HepG2 (cell line): ENCODE measurements at regions of chr4 and their contacts with region 1.

Region 1: GRCh38 chr4:138348055-138348454 is 105.9 kb upstream of the SLC7A11 start:
- DNase-seq: peak; percentile 80
- ATAC-seq: peak; percentile 87
- H3K4me3 ChIP-seq: no peak overlapping the region
- H3K27ac ChIP-seq: peak overlapping the region; percentile 38
- H3K4me1 ChIP-seq: peaks cover 41% of the 10 kb centered on the region
- H3K27me3 ChIP-seq: no peaks in the 10 kb centered on the region; a peak in 1 of 5 replicates
- CTCF ChIP-seq: no peak
- EP300 ChIP-seq: peak in 1 of 2 experiments; percentile 41; a peak in 1 of 4 replicates
- POLR2A ChIP-seq: no peak
- RAD21 ChIP-seq: no peak

Region 2: GRCh38 chr4:138097912-138098600 is 250.0 kb before region 1 on chr4:
- CTCF ChIA-PET with region 1: no interaction called
- POLR2A ChIA-PET with region 1: no interaction called
- in situ Hi-C with region 1: no loop called
- intact Hi-C with region 1: loop called (anchors 5 kb)
- DNase-seq: peak; percentile 80
- ATAC-seq: peak; percentile 100
- H3K4me3 ChIP-seq: no peak overlapping the region; a peak in 1 of 6 replicates
- H3K27ac ChIP-seq: peak overlapping the region; percentile 41
- H3K4me1 ChIP-seq: peaks cover 58% of the 10 kb centered on the region
- H3K27me3 ChIP-seq: no peaks in the 10 kb centered on the region
- CTCF ChIP-seq: peak; percentile 28; the same call in 1 of the 2 replicates
- EP300 ChIP-seq: peak in 1 of 2 experiments; percentile 64; a peak in 2 of 4 replicates
- POLR2A ChIP-seq: no peak
- RAD21 ChIP-seq: no peak

Region 3: DNA sequence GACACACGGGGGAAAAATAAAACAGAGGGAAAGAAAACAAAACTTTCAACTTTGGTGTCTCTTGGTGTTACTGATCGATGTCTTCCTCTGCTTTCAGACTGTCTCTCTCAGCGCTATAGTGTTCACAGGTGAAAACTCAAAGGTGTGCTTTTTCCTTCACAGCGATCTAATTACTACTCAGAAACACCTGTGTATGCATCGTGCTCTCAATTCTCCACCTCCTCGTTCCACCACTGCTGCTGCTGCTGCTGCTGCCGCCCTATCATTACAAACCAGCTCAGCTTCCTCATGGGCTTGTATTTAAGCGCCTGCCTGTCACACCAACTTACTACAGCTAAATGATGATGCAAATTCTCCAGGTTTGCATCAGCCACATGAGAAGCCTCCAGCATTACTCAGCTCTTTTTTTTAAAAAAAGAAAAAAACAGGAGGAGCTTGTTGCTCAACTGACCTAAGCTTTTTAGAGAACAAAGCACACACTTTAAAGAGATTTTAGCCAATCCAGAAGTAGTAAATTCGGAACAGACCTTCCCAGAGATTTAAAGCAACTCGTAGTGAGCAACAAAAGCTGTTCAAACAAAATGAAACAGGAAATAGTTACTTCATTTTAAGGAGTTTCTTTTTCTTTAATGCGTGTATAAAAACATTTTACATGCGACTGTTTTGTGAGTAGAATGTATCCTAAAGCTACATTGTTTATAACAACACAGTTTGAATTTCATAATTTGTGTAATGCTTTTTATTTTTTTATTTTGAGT is 105.8 kb before region 1 on chr4 and contains the start of gene SLC7A11:
- CTCF ChIA-PET with region 1: no interaction called
- POLR2A ChIA-PET with region 1: interaction called, 13 read pairs
- in situ Hi-C with region 1: no loop called
- intact Hi-C with region 1: loop called (anchors 1 kb)
- DNase-seq: peak; percentile 97
- ATAC-seq: peak; percentile 97
- H3K4me3 ChIP-seq: peak within 1 kb of the TSS; percentile 77 to 96 (median 83)
- H3K27ac ChIP-seq: peak within 1 kb of the TSS; percentile 93
- H3K4me1 ChIP-seq: peaks cover 27% of the 10 kb centered on the region
- H3K27me3 ChIP-seq: no peaks in the 10 kb centered on the region; a peak in 1 of 5 replicates
- CTCF ChIP-seq: no peak
- EP300 ChIP-seq: peak in 1 of 2 experiments; percentile 91; a peak in 3 of 4 replicates
- POLR2A ChIP-seq: peak; percentile 74 to 96
- RAD21 ChIP-seq: no peak
- total RNA-seq, gene SLC7A11: 11.9 and 15.7 TPM in 2 replicates

Region 4: GRCh38 chr4:138367942-138368341 is 19.9 kb after region 1 on chr4:
- CTCF ChIA-PET with region 1: no interaction called
- POLR2A ChIA-PET with region 1: no interaction called
- in situ Hi-C with region 1: no loop called
- intact Hi-C with region 1: loop called (anchors 1 kb)
- DNase-seq: peak; percentile 30
- ATAC-seq: peak; percentile 99
- H3K4me3 ChIP-seq: no peak overlapping the region
- H3K27ac ChIP-seq: peak overlapping the region; percentile 42
- H3K4me1 ChIP-seq: peaks cover 32% of the 10 kb centered on the region
- H3K27me3 ChIP-seq: no peaks in the 10 kb centered on the region
- CTCF ChIP-seq: no peak
- EP300 ChIP-seq: peak in 1 of 2 experiments; percentile 94; a peak in 2 of 4 replicates
- POLR2A ChIP-seq: no peak
- RAD21 ChIP-seq: no peak

Region 5: GRCh38 chr4:139266583-139267257 is 918.7 kb after region 1 on chr4:
- CTCF ChIA-PET with region 1: no interaction called
- POLR2A ChIA-PET with region 1: no interaction called
- in situ Hi-C with region 1: no loop called
- intact Hi-C with region 1: no loop called
- DNase-seq: peak; percentile 54
- ATAC-seq: peak; percentile 96
- H3K4me3 ChIP-seq: peak overlapping the region; percentile 49 to 69 (median 54); a peak in 5 of 6 replicates
- H3K27ac ChIP-seq: peak overlapping the region; percentile 35
- H3K4me1 ChIP-seq: peaks cover 34% of the 10 kb centered on the region
- H3K27me3 ChIP-seq: no peaks in the 10 kb centered on the region
- CTCF ChIP-seq: no peak
- EP300 ChIP-seq: no peak
- POLR2A ChIP-seq: no peak
- RAD21 ChIP-seq: no peak

Region 6: GRCh38 chr4:140256335-140256734 is 1908.3 kb after region 1 on chr4:
- CTCF ChIA-PET with region 1: no interaction called
- POLR2A ChIA-PET with region 1: no interaction called
- in situ Hi-C with region 1: no loop called
- intact Hi-C with region 1: no loop called
- DNase-seq: peak; percentile 38
- ATAC-seq: no peak
- H3K4me3 ChIP-seq: no peak overlapping the region
- H3K27ac ChIP-seq: no peak overlapping the region
- H3K4me1 ChIP-seq: peaks cover 43% of the 10 kb centered on the region
- H3K27me3 ChIP-seq: peaks cover 2 to 8% of the 10 kb centered on the region in 2 experiments; a peak in 2 of 5 replicates
- CTCF ChIP-seq: no peak
- EP300 ChIP-seq: peak in 1 of 2 experiments; percentile 24; a peak in 1 of 4 replicates
- POLR2A ChIP-seq: no peak
- RAD21 ChIP-seq: no peak